K562 (cell line): ENCODE measurements at regions of chr10 and their contacts with region 1.

Region 1: GRCh38 chr10:26725837-26726727 is 28.6 kb downstream of the PDSS1 start:
- DNase-seq: peak; percentile 51 to 62 (median 58)
- ATAC-seq: peak; percentile 81
- H3K4me3 ChIP-seq: no peak overlapping the region
- H3K27ac ChIP-seq: no peak overlapping the region
- H3K4me1 ChIP-seq: no peaks in the 10 kb centered on the region
- H3K27me3 ChIP-seq: no peaks in the 10 kb centered on the region; a peak in 1 of 5 replicates
- CTCF ChIP-seq: peak; percentile 73 to 88 (median 81)
- EP300 ChIP-seq: no peak
- POLR2A ChIP-seq: no peak
- RAD21 ChIP-seq: peak; percentile 80 to 82

Region 2: GRCh38 chr10:26334932-26335573 is 391.0 kb before region 1 on chr10:
- CTCF ChIA-PET with region 1: no interaction called
- POLR2A ChIA-PET with region 1: no interaction called
- in situ Hi-C with region 1: no loop called
- intact Hi-C with region 1: loop called (anchors 5 kb)
- DNase-seq: peak; percentile 42 to 64 (median 48)
- ATAC-seq: peak; percentile 78
- H3K4me3 ChIP-seq: no peak overlapping the region
- H3K27ac ChIP-seq: no peak overlapping the region
- H3K4me1 ChIP-seq: no peaks in the 10 kb centered on the region
- H3K27me3 ChIP-seq: no peaks in the 10 kb centered on the region
- CTCF ChIP-seq: peak; percentile 48 to 75 (median 70)
- EP300 ChIP-seq: no peak
- POLR2A ChIP-seq: no peak
- RAD21 ChIP-seq: peak; percentile 49 to 87; a peak in 3 of 4 replicates

Region 3: DNA sequence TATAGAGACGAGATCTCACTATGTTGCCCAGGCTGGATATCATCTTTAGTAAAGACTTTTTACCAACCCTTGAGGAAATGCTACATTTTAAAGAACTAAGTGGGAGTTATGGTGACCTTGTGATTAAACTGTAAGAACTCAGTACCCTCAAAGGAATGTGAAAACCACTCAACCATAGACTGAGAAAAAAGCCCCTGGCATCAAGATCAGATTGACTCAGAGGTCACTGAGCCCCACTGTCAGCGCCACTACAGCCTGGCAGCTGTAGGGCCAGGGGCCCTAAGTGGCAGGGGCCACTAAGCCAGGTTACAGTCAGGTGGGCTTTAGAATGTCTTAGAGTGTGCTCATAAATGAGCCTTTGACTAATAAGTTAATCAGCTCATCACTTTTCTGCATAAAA is 232.1 kb before region 1 on chr10:
- CTCF ChIA-PET with region 1: no interaction called
- POLR2A ChIA-PET with region 1: no interaction called
- in situ Hi-C with region 1: no loop called
- intact Hi-C with region 1: no loop called
- DNase-seq: no peak
- ATAC-seq: no peak
- H3K4me3 ChIP-seq: no peak overlapping the region
- H3K27ac ChIP-seq: no peak overlapping the region
- H3K4me1 ChIP-seq: no peaks in the 10 kb centered on the region
- H3K27me3 ChIP-seq: no peaks in the 10 kb centered on the region
- CTCF ChIP-seq: no peak
- EP300 ChIP-seq: no peak
- POLR2A ChIP-seq: no peak
- RAD21 ChIP-seq: no peak

Region 4: DNA sequence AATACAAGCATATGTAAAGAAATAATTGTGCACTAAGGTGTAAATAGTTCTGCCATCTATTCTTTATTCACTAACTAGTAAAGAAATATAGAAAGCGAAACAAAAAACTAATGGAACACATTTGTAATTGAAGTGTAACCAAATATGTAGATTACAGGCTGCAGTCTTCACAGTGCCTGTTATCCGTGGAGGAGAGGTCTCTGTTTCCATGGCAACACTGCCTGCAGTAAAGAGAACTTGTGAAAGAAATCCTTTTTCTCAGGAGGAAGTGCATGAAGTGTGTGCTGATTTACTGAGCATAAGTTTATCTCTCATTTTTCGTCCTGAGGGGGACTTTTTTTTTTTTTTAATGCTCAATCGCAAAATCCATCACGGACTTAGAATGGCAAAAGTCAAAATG is 185.5 kb before region 1 on chr10:
- CTCF ChIA-PET with region 1: no interaction called
- POLR2A ChIA-PET with region 1: no interaction called
- in situ Hi-C with region 1: no loop called
- intact Hi-C with region 1: no loop called
- DNase-seq: peak in 1 of 4 experiments; percentile 12
- ATAC-seq: no peak
- H3K4me3 ChIP-seq: no peak overlapping the region
- H3K27ac ChIP-seq: no peak overlapping the region
- H3K4me1 ChIP-seq: no peaks in the 10 kb centered on the region
- H3K27me3 ChIP-seq: peaks cover 5 to 14% of the 10 kb centered on the region in 2 experiments; a peak in 2 of 5 replicates
- CTCF ChIP-seq: no peak
- EP300 ChIP-seq: no peak
- POLR2A ChIP-seq: no peak
- RAD21 ChIP-seq: no peak

Region 5: GRCh38 chr10:26621889-26622711 is 104.0 kb before region 1 on chr10:
- CTCF ChIA-PET with region 1: no interaction called
- POLR2A ChIA-PET with region 1: no interaction called
- in situ Hi-C with region 1: no loop called
- intact Hi-C with region 1: loop called (anchors 5 kb)
- DNase-seq: peak in 2 of 4 experiments; percentile 13 to 14
- ATAC-seq: peak; percentile 83
- H3K4me3 ChIP-seq: peak overlapping the region; percentile 17; the same call in 1 of the 2 replicates
- H3K27ac ChIP-seq: no peak overlapping the region
- H3K4me1 ChIP-seq: peaks cover 0 to 6% of the 10 kb centered on the region in 2 experiments; a peak in 2 of 5 replicates
- H3K27me3 ChIP-seq: peaks cover 23 to 24% of the 10 kb centered on the region in 2 experiments
- CTCF ChIP-seq: no peak
- EP300 ChIP-seq: no peak
- POLR2A ChIP-seq: no peak
- RAD21 ChIP-seq: no peak

Region 6: GRCh38 chr10:26799342-26799741 is 73.3 kb after region 1 on chr10:
- CTCF ChIA-PET with region 1: no interaction called
- POLR2A ChIA-PET with region 1: no interaction called
- in situ Hi-C with region 1: no loop called
- intact Hi-C with region 1: no loop called
- DNase-seq: no peak
- ATAC-seq: no peak
- H3K4me3 ChIP-seq: no peak overlapping the region
- H3K27ac ChIP-seq: no peak overlapping the region
- H3K4me1 ChIP-seq: no peaks in the 10 kb centered on the region; a peak in 2 of 5 replicates
- H3K27me3 ChIP-seq: no peaks in the 10 kb centered on the region
- CTCF ChIP-seq: no peak
- EP300 ChIP-seq: no peak
- POLR2A ChIP-seq: no peak
- RAD21 ChIP-seq: no peak

Region 7: GRCh38 chr10:26870766-26871165 is 144.7 kb after region 1 on chr10:
- CTCF ChIA-PET with region 1: no interaction called
- POLR2A ChIA-PET with region 1: no interaction called
- in situ Hi-C with region 1: loop called (anchors 5 kb)
- intact Hi-C with region 1: no loop called
- DNase-seq: no peak
- ATAC-seq: no peak
- H3K4me3 ChIP-seq: no peak overlapping the region
- H3K27ac ChIP-seq: no peak overlapping the region
- H3K4me1 ChIP-seq: peaks cover 0 to 3% of the 10 kb centered on the region in 2 experiments; a peak in 2 of 5 replicates
- H3K27me3 ChIP-seq: peaks cover 6 to 12% of the 10 kb centered on the region in 2 experiments; a peak in 2 of 5 replicates
- CTCF ChIP-seq: no peak
- EP300 ChIP-seq: no peak
- POLR2A ChIP-seq: no peak
- RAD21 ChIP-seq: no peak

Region 8: GRCh38 chr10:26881600-26882331 is 155.7 kb after region 1 on chr10:
- CTCF ChIA-PET with region 1: interaction called, 52 read pairs
- POLR2A ChIA-PET with region 1: no interaction called
- in situ Hi-C with region 1: no loop called
- intact Hi-C with region 1: loop called (anchors 2 kb)
- DNase-seq: peak; percentile 23 to 61 (median 31)
- ATAC-seq: peak; percentile 92
- H3K4me3 ChIP-seq: no peak overlapping the region
- H3K27ac ChIP-seq: no peak overlapping the region
- H3K4me1 ChIP-seq: no peaks in the 10 kb centered on the region; a peak in 1 of 5 replicates
- H3K27me3 ChIP-seq: peaks cover 3 to 27% of the 10 kb centered on the region in 2 experiments; a peak in 3 of 5 replicates
- CTCF ChIP-seq: peak; percentile 74 to 91 (median 76)
- EP300 ChIP-seq: no peak
- POLR2A ChIP-seq: no peak
- RAD21 ChIP-seq: peak; percentile 86 to 94

Region 9: DNA sequence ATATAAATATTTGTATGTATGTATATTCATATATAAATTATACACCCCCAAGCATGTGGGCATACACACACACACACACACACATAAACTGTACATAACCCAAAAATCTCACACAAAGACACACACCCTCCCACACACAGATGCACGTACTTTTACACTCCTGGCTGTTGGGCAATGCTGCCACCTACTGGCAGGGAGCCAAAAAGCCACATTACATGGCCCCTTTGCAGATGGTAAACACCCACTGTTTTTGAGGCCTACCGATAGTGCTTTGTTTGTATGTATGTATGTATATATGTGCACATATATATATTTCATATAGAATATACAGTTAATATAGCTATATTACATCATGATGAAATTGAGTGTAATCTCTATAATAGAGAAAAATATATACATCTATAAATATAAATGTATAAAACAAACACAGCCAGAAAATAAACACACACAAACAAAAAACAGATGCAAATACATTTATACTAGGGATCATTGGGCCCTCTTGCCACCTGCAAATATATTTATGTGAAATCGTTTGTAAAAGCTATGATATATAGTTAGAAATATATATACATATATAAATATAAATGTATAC is 634.6 kb after region 1 on chr10:
- CTCF ChIA-PET with region 1: interaction called, 3 read pairs
- POLR2A ChIA-PET with region 1: no interaction called
- in situ Hi-C with region 1: no loop called
- intact Hi-C with region 1: loop called (anchors 10 kb)
- DNase-seq: peak; percentile 59 to 86 (median 68)
- ATAC-seq: peak; percentile 96
- H3K4me3 ChIP-seq: no peak overlapping the region
- H3K27ac ChIP-seq: no peak overlapping the region
- H3K4me1 ChIP-seq: no peaks in the 10 kb centered on the region
- H3K27me3 ChIP-seq: no peaks in the 10 kb centered on the region; a peak in 1 of 5 replicates
- CTCF ChIP-seq: peak; percentile 87 to 94 (median 87)
- EP300 ChIP-seq: no peak
- POLR2A ChIP-seq: no peak
- RAD21 ChIP-seq: peak; percentile 88 to 91